GM18951 (cell line): ENCODE measurements at regions of chr9 and their contacts with region 1.

Region 1: GRCh38 chr9:130770679-130771442 is 64.2 kb upstream of the ABL1 start:
- POLR2A ChIP-seq: no peak

Region 2: GRCh38 chr9:130847327-130848217 is 76.7 kb after region 1 on chr9:
- in situ Hi-C with region 1: loop called (anchors 10 kb)
- POLR2A ChIP-seq: no peak

Region 3: DNA sequence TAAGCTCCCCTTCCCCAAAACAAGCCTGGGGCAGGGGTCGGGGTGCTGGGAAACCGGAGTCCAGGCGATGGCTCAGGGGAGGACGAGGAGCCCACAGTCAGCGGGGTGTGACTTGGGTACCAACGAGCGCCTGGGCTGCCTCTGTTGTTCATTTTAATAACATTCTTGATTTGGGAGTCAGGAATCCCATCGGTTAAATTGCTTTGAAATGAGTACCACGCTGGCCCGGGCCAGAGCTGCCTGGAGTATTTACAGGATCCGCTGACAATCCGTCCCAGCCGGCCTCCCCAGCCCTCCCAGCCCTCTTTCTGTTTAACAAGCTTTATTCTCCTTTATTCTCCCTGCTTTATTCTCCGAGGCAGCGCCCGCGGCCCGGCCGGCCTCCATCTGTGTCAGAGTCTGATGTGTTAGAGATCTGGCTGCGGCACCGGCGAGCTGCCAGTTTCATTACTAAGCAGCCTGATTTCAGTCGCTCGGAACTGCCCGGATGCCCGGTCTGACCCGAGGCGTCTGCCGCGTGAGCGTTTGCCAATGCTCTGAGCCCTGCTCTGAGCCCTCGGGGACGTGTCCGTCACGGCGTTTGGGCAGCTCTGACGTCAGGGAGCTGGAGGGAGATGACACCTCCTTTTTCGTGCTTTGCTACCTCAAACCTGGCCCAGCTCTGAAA is 142.2 kb after region 1 on chr9:
- in situ Hi-C with region 1: no loop called
- POLR2A ChIP-seq: no peak